A673 (cell line): ENCODE measurements at regions of chr1 and their contacts with region 1.

Region 1: DNA sequence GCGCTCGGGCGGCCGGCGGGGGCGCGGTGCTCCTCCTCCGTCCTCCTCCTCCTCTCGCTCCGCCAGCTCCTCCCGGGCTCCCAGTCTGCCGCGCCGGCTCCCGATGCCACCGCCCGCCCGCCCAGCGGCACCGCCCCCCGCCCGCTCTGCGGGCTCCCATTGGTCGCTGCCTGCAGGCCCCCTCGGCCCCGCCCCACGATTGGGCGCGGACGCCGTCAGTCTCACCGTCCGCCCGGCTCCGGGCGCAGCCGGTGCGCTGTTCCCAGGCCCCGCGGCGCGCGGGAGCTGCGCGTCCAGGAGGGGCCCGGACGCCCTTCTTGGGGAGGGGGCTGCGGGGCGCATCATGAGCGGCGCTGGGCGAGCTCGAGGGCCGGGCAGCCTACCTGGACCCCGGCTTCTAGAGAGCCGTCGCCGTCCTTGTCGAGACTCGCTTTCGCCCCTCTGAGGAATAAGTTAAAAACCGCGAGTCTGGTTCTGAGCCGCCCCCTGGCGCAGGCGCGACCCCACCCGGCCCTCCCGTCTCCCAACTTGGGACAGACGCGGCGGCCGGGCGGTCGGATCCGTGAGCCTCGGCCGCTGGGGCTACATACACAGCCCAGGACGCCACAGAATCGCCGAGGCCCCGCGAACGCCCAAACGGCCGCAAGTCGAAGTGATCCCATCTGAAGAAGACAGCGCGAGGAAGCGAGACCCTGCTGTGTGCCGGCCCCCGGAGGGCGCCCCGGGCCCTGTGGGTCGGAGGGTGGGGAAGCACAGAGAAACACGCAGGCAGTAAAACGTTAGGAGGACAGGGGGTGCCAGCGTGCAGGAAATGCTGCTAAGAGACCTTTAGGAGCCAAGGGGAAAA is at the start of gene SIPA1L2:
- DNase-seq: peak; percentile 95
- H3K4me3 ChIP-seq: peak within 1 kb of the TSS; percentile 53
- H3K27ac ChIP-seq: no peak within 1 kb of the TSS
- H3K4me1 ChIP-seq: peaks cover 10% of the 10 kb centered on the region
- H3K27me3 ChIP-seq: peaks cover 4% of the 10 kb centered on the region
- CTCF ChIP-seq: peak; percentile 63
- total RNA-seq, gene SIPA1L2: 3.4 and 6.2 TPM in 2 replicates

Region 2: GRCh38 chr1:231866392-231867331 is 763.6 kb before region 1 on chr1:
- CTCF ChIA-PET with region 1: no interaction called
- POLR2A ChIA-PET with region 1: no interaction called
- intact Hi-C with region 1: loop called (anchors 1 kb)
- DNase-seq: peak; percentile 72
- H3K4me3 ChIP-seq: no peak overlapping the region
- H3K27ac ChIP-seq: no peak overlapping the region
- H3K4me1 ChIP-seq: no peaks in the 10 kb centered on the region
- H3K27me3 ChIP-seq: no peaks in the 10 kb centered on the region
- CTCF ChIP-seq: peak; percentile 89

Region 3: DNA sequence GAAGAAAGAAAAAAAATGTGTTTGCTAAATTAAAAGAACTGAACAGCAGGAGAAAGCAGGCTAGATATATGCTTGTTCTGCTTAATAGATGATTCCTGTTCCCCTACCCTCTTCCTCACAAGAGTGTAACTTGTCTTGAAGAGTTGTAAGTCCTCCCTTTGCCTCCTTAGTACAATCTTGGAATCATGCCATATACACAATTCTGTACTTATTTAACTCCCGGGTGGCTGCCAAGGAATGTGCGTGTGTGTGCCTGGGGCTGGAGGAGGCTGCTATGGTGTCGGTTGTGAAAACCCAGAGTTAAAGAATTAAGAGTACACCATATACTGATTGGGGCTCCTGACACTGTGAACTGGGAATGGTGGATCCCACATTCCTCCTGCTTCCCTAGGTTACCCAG is 194.5 kb before region 1 on chr1:
- CTCF ChIA-PET with region 1: no interaction called
- POLR2A ChIA-PET with region 1: no interaction called
- intact Hi-C with region 1: loop called (anchors 10 kb)
- DNase-seq: peak; percentile 62
- H3K4me3 ChIP-seq: no peak overlapping the region
- H3K27ac ChIP-seq: no peak overlapping the region
- H3K4me1 ChIP-seq: peaks cover 38% of the 10 kb centered on the region
- H3K27me3 ChIP-seq: no peaks in the 10 kb centered on the region
- CTCF ChIP-seq: no peak

Region 4: DNA sequence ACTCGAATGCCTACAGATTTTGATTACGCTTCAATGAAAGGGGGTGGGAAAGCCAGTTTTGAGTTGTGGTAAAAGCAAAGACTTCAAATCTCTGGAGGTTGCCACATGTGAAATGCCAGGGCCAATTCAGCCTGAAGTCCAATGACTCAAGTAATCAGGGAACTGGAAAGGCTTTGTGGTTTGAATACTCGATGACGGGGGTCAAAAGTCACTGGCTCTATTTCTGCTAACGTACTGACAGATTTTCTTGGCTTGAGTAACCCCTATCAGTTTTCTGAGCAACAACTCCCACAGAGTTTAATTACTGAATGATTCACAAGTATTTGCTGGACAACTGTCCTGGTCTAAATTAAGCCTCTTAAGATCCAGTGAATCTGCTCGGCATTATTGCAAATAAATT is 152.5 kb before region 1 on chr1:
- CTCF ChIA-PET with region 1: no interaction called
- POLR2A ChIA-PET with region 1: no interaction called
- intact Hi-C with region 1: loop called (anchors 10 kb)
- DNase-seq: no peak
- H3K4me3 ChIP-seq: no peak overlapping the region
- H3K27ac ChIP-seq: no peak overlapping the region
- H3K4me1 ChIP-seq: no peaks in the 10 kb centered on the region
- H3K27me3 ChIP-seq: no peaks in the 10 kb centered on the region
- CTCF ChIP-seq: no peak

Region 5: GRCh38 chr1:232594768-232595698 is 35.2 kb before region 1 on chr1:
- CTCF ChIA-PET with region 1: no interaction called
- POLR2A ChIA-PET with region 1: interaction called, 19 read pairs
- intact Hi-C with region 1: no loop called
- DNase-seq: no peak
- H3K4me3 ChIP-seq: no peak overlapping the region
- H3K27ac ChIP-seq: no peak overlapping the region
- H3K4me1 ChIP-seq: peaks cover 16% of the 10 kb centered on the region
- H3K27me3 ChIP-seq: no peaks in the 10 kb centered on the region
- CTCF ChIP-seq: no peak

Region 6: DNA sequence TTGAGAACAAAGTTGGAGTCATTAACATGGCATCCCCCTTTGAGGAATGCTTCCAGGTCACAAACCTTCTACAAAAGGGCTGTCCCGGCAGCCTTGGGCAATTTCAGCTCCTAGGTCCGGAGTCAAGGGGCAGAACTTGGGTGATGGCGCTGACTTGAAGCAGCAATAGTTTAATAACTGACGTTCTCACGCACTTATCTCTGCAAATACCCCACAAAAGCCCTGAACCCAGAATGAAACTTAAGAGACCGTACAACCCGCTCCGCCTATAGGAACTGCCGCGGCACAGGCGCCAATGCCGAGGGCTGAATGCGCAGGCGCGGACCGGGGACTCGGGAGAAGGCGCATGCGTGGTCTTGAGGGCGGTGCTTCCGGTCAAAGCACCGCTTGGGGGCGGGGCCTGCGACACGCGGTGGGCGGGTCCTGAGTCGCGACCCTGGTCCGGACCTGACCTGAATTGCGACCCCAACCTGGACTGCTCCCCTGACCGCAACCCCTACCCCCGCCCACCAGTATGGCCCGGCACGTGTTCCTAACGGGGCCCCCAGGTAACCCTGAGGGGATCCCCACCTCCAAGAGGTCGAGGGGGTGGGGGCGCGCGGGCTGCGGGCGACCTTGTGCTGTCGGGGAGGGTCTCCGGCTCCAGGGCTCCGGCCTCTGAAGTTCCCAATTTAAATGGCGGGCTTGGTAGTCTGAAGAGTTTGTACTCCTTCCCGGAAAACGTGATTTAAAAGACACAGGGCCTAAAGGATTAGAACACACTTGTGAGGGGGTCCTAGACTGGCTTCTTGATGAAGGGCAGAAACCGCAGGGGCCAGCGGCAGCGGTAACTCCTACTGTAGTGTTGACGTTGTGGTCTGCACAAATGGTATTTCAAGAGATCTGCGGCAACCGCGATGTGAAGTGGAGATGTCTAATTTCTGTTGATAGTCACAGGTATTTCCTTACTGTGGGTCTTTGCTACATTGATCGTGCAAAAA is 320.2 kb after region 1 on chr1 and contains the start of gene NTPCR:
- CTCF ChIA-PET with region 1: no interaction called
- POLR2A ChIA-PET with region 1: no interaction called
- intact Hi-C with region 1: loop called (anchors 5 kb)
- DNase-seq: peak; percentile 95
- H3K4me3 ChIP-seq: peak within 1 kb of the TSS; percentile 73
- H3K27ac ChIP-seq: peak within 1 kb of the TSS; percentile 74
- H3K4me1 ChIP-seq: peaks cover 20% of the 10 kb centered on the region
- H3K27me3 ChIP-seq: no peaks in the 10 kb centered on the region
- CTCF ChIP-seq: no peak
- total RNA-seq, gene NTPCR: 50.0 and 61.6 TPM in 2 replicates